ENCODE measurements at regions of chr10 and their contacts with region 1.

Region 1: DNA sequence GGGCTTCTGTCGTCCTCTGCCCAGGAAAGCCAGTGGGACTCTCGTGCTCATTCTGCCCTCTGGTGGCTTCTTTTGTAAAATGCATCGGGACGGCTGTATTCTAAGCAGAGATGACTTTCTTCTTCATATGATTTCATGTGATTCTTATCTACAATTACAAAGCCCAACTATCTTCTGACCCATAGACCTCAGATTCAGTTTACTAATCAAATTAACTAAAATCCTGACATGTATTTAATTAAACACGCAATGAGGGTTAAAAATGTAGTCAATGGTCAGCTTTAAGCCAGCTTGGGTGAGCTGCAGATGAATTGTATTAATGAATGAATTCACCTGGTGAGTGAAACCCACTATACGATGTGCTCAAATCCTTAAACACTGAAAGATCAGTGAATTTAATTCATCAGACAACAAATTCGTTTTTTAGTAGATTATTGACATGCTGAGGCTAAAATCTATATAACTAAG is 117.6 kb upstream of the FAM204A start:
- DNase-seq: peak; percentile 18
- H3K4me3 ChIP-seq: no peak overlapping the region
- H3K27ac ChIP-seq: no peak overlapping the region
- H3K27me3 ChIP-seq: no peaks in the 10 kb centered on the region
- CTCF ChIP-seq: peak; percentile 84

Region 2: GRCh38 chr10:118430190-118430589 is 29.6 kb before region 1 on chr10:
- CTCF ChIA-PET with region 1: interaction called, 17 read pairs
- POLR2A ChIA-PET with region 1: no interaction called
- DNase-seq: no peak
- H3K4me3 ChIP-seq: no peak overlapping the region
- H3K27ac ChIP-seq: no peak overlapping the region
- H3K27me3 ChIP-seq: no peaks in the 10 kb centered on the region
- CTCF ChIP-seq: no peak

Region 3: GRCh38 chr10:118474111-118474510 is 14.4 kb after region 1 on chr10:
- CTCF ChIA-PET with region 1: interaction called, 18 read pairs
- POLR2A ChIA-PET with region 1: no interaction called
- DNase-seq: no peak
- H3K4me3 ChIP-seq: no peak overlapping the region
- H3K27ac ChIP-seq: no peak overlapping the region
- H3K27me3 ChIP-seq: no peaks in the 10 kb centered on the region
- CTCF ChIP-seq: no peak

Measured in AG04450 (cell line).